Heart left ventricle (tissue), 16 donors: ENCODE measurements at regions of chr4 and their contacts with region 1.

Region 1: GRCh38 chr4:23929248-23929647 is 39.4 kb upstream of the PPARGC1A start:
- DNase-seq: peak in 1 of 5 donors; percentile 30
- ATAC-seq: no peak
- H3K4me3 ChIP-seq: no peak overlapping the region
- H3K27ac ChIP-seq: peak overlapping the region in 7 of 12 donors; percentile 80 to 91 (median 86)
- H3K4me1 ChIP-seq: peaks cover 0 to 33% (median 10%) of the 10 kb centered on the region in 12 donors
- H3K27me3 ChIP-seq: no peaks in the 10 kb centered on the region
- CTCF ChIP-seq: no peak
- POLR2A ChIP-seq: no peak

Region 2: DNA sequence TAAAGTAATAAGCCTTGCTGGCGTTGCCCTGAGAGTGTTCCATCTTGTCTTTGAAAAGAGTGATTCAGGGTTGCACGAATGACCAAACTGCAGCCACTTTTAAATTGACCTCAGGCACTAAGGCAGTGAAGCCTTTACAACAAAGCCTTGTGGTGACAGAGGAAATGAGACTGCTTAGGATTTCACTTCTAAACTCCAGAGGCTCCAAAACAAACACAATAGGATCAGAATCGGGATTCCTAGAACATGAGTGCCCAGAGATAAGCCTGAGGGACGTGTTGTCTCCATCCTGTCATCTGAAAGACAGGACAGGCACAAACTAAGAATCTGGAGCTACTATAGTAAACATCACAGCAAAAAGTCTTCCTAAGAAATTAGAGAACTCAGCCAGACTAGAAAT is 444.6 kb before region 1 on chr4:
- intact Hi-C with region 1: no loop called
- DNase-seq: no peak
- ATAC-seq: peak in 2 of 4 donors; percentile 26 to 55
- H3K4me3 ChIP-seq: no peak overlapping the region
- H3K27ac ChIP-seq: no peak overlapping the region
- H3K4me1 ChIP-seq: peaks cover 0 to 17% (median 2%) of the 10 kb centered on the region in 12 donors
- H3K27me3 ChIP-seq: no peaks in the 10 kb centered on the region
- CTCF ChIP-seq: no peak
- POLR2A ChIP-seq: no peak

Region 3: GRCh38 chr4:23889814-23890341 is 39.4 kb before region 1 on chr4 and contains the start of gene PPARGC1A:
- intact Hi-C with region 1: loop called in 7 of 10 experiments (anchors 1 to 5 kb)
- DNase-seq: peak in 4 of 5 donors; percentile 73 to 82 (median 78)
- ATAC-seq: peak; percentile 91 to 95 (median 94)
- H3K4me3 ChIP-seq: peak within 1 kb of the TSS; percentile 39 to 73 (median 58)
- H3K27ac ChIP-seq: peak within 1 kb of the TSS; percentile 80 to 94 (median 86)
- H3K4me1 ChIP-seq: peaks cover 0 to 14% (median under 1%) of the 10 kb centered on the region in 12 donors
- H3K27me3 ChIP-seq: no peaks in the 10 kb centered on the region
- CTCF ChIP-seq: no peak
- POLR2A ChIP-seq: peak in 1 of 2 donors; percentile 84
- total RNA-seq, gene PPARGC1A: 47.2 to 103 (median 84.4) TPM

Region 4: DNA sequence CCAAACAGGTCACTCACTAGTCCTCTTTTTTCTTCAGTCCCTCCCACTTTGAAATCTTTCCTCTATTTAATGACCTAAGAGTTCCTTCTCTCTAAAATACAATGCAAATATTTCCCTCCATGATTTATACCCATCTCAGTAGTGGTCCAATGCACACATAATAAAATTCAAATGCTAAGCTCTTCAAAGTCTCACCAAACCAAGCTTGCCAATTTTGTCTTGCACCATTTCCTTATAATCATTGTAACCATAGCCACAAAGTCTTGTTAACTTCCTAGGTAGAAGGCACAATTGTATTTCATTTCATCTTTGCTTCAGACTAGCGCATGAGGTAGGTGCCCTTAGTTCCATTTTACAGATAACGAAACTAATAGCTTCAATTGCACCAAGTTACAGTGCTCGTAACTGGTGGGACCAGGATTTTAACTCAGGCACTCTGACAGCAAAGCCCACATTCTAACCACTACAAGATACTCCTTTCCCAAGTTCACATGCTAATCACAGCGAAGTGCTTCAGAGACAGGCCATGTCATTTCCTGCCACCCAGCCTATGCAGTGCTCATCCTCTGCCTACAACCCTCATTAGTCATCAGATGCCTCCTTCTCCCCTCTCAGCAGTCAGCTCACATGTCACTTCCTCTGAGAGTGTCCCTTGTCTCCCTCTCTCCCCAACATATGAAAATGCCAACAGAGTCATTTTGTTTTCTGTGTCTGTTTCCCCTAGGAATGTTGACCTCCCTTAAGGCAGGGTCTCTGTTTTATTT is 27.5 kb after region 1 on chr4:
- intact Hi-C with region 1: no loop called
- DNase-seq: no peak
- ATAC-seq: no peak
- H3K4me3 ChIP-seq: no peak overlapping the region
- H3K27ac ChIP-seq: no peak overlapping the region
- H3K4me1 ChIP-seq: peaks cover 0 to 9% (median 0%) of the 10 kb centered on the region in 12 donors
- H3K27me3 ChIP-seq: no peaks in the 10 kb centered on the region
- CTCF ChIP-seq: no peak
- POLR2A ChIP-seq: no peak

Region 5: GRCh38 chr4:24105183-24106038 is 176.2 kb after region 1 on chr4:
- intact Hi-C with region 1: no loop called
- DNase-seq: no peak
- ATAC-seq: peak in 3 of 4 donors; percentile 44 to 74 (median 47)
- H3K4me3 ChIP-seq: no peak overlapping the region
- H3K27ac ChIP-seq: peak overlapping the region in 1 of 12 donors; percentile 46
- H3K4me1 ChIP-seq: peaks cover 0 to 21% (median 12%) of the 10 kb centered on the region in 12 donors
- H3K27me3 ChIP-seq: no peaks in the 10 kb centered on the region
- CTCF ChIP-seq: no peak
- POLR2A ChIP-seq: no peak

Region 6: GRCh38 chr4:24382381-24382780 is 453.1 kb after region 1 on chr4:
- intact Hi-C with region 1: no loop called
- DNase-seq: no peak
- ATAC-seq: peak in 2 of 4 donors; percentile 60 to 82
- H3K4me3 ChIP-seq: no peak overlapping the region
- H3K27ac ChIP-seq: no peak overlapping the region
- H3K4me1 ChIP-seq: no peaks in the 10 kb centered on the region
- H3K27me3 ChIP-seq: no peaks in the 10 kb centered on the region
- CTCF ChIP-seq: no peak
- POLR2A ChIP-seq: no peak